Activated T-helper 2 cell treated with anti-CD3 and anti-CD28 coated beads, Interferon-gamma antibody, Interleukin-2, Interleukin-4, amounts not matched to agents 10 μg/mL and 5 μg/mL and 100 μg/mL, durations not matched to agents 14 hours and 24 hours and 36 hours (primary cell): ENCODE measurements at regions of chr5 and their contacts with region 1.

Region 1: GRCh38 chr5:132688536-132689339 is 14.9 kb downstream of the IL4 start:
- DNase-seq: no peak
- H3K4me3 Mint-ChIP-seq: no peak overlapping the region
- H3K27ac Mint-ChIP-seq: peak overlapping the region; percentile 68
- H3K4me1 Mint-ChIP-seq: peaks cover 45% of the 10 kb centered on the region
- H3K27me3 Mint-ChIP-seq: peaks cover 1% of the 10 kb centered on the region

Region 2: DNA sequence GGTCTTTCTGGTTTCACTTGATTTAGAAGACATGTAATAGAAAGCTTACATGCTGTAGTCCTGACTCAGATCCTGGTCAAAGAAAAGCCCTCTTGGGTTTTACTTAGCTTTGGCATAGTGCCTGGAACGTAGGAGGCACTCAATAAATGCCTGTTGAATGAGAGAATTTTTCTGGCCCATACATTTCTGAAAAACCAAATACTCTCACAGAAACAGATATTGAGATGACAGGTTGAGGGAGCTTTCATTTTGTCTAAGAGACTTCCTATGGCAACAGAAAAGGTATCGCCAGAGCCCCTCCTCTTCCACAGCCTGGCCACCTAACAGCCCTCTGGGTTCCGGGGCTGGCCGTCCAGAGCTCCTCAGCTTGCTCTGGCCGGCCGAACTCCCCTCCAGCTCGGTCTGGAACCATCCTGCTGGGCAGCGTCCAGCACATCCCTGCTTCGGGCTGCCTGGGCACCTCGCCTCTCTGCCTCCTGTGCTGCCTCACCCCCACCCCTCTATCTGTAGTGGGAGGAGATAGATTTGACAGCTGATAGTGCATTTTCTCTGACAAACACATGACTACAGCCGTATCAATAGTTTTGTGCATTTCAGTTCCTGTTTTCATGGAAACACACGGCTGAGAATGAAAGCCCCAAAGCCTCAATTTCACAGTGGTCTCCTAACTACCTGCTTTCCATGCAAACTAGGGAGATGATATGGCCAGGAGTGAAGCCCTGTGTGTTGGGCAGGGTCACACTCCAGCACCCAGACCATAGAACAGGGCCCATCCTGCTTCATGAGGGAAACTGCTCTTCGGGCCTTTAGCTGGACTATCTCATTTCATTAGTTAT is 13.8 kb before region 1 on chr5:
- intact Hi-C with region 1: loop called (anchors 1 kb)
- DNase-seq: no peak
- H3K4me3 Mint-ChIP-seq: peak overlapping the region; percentile 70
- H3K27ac Mint-ChIP-seq: peak overlapping the region; percentile 95
- H3K4me1 Mint-ChIP-seq: peaks cover 40% of the 10 kb centered on the region
- H3K27me3 Mint-ChIP-seq: no peaks in the 10 kb centered on the region

Region 3: GRCh38 chr5:132759114-132760048 is 70.6 kb after region 1 on chr5:
- intact Hi-C with region 1: no loop called
- DNase-seq: no peak
- H3K4me3 Mint-ChIP-seq: no peak overlapping the region
- H3K27ac Mint-ChIP-seq: no peak overlapping the region
- H3K4me1 Mint-ChIP-seq: peaks cover 10% of the 10 kb centered on the region
- H3K27me3 Mint-ChIP-seq: no peaks in the 10 kb centered on the region